Activated B cell treated with CpG ODN at 0.5 μM for 24 hours (primary cell): ENCODE measurements at regions of chr6 and their contacts with region 1.

Region 1: DNA sequence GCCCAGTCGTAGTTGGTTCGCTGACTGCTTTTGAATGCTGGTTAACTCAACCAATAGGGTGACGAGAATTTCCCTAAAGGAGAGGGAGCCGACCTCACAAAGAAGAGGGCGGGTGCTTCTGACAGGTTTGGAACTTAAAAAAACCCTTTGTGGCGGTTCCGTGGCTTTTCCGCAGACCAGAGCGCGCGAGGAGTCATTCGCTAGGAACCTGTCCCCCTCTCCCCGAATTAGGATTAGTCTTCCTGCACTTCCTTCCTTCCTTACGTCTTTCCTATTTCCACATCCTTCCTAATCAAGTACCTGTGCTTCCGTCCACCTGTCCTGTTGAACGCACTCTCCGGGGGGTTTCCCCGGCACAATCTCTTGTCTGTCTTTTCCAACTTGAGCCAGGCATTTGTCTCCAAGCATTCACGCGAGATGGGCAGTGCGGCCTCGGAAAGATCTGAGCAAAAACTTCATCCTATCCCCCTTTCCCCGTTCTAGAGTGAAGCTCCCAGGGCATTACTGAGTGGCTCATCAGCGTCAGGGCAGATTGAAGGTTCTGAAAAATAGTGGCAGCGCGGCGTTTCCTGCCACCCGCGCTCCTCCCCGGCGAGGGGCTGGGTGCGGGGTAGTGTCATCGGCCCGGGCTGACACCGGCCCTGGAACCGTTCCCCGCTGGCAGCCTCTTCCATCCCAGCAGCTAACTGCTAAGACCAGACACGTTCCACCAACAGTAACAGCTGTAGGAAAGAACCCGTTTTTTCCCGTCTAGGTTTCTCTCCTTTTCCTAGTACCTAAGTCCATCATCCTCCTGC is 1.5 kb upstream of the STXBP5 start:
- DNase-seq: peak; percentile 56
- ATAC-seq: peak; percentile 83
- H3K4me3 Mint-ChIP-seq: peak overlapping the region; percentile 93
- H3K27ac Mint-ChIP-seq: peak overlapping the region; percentile 96
- H3K4me1 Mint-ChIP-seq: peaks cover 28% of the 10 kb centered on the region
- H3K27me3 Mint-ChIP-seq: no peaks in the 10 kb centered on the region
- CTCF ChIP-seq: no peak

Region 2: DNA sequence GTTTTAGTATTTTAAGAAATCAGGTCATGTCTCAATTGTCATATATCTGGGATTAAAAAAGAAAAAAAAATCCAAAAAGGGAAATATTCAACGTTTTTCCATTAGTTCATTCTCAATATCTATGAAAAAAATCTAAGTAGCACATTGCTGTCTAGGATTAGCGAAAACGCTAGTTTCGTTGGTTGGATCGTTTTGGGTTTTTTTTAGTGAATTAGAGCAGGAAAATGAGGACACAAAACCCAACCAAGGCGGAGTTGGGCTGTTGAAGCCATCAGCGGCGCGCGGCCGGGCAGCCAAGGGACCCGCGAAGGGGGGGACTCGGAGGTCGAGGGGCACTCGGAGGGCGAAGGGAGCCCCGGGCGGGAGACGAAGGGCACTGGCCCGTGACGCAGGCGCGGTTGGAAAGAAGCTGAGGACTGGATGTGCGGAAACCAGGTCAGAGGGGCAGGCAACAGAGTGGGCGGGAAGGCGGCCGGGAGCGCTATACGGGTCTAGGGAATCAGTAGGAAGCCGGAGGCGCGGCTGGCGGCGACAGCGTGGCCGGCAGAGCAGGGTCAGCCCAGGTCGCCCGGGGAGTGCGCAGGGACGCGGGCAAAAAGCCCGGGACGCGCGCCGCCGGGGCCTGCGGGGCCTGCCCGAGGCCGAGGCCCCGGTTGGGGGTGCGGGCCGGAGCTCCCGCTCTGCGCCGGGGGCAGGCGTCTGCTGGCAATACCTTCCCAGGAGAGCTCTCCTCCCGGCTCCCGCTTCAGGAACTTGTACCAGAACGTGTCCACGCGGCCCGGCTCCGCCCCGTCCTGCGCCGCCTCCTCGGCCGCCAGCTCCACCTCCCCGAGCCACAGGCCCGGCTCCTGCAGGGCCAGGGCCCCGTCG is 1468.0 kb before region 1 on chr6:
- CTCF ChIA-PET with region 1: no interaction called
- POLR2A ChIA-PET with region 1: no interaction called
- intact Hi-C with region 1: loop called (anchors 2 kb)
- DNase-seq: peak; percentile 77
- ATAC-seq: peak; percentile 72
- H3K4me3 Mint-ChIP-seq: peak overlapping the region; percentile 94
- H3K27ac Mint-ChIP-seq: peak overlapping the region; percentile 94
- H3K4me1 Mint-ChIP-seq: peaks cover 34% of the 10 kb centered on the region
- H3K27me3 Mint-ChIP-seq: no peaks in the 10 kb centered on the region
- CTCF ChIP-seq: no peak

Region 3: DNA sequence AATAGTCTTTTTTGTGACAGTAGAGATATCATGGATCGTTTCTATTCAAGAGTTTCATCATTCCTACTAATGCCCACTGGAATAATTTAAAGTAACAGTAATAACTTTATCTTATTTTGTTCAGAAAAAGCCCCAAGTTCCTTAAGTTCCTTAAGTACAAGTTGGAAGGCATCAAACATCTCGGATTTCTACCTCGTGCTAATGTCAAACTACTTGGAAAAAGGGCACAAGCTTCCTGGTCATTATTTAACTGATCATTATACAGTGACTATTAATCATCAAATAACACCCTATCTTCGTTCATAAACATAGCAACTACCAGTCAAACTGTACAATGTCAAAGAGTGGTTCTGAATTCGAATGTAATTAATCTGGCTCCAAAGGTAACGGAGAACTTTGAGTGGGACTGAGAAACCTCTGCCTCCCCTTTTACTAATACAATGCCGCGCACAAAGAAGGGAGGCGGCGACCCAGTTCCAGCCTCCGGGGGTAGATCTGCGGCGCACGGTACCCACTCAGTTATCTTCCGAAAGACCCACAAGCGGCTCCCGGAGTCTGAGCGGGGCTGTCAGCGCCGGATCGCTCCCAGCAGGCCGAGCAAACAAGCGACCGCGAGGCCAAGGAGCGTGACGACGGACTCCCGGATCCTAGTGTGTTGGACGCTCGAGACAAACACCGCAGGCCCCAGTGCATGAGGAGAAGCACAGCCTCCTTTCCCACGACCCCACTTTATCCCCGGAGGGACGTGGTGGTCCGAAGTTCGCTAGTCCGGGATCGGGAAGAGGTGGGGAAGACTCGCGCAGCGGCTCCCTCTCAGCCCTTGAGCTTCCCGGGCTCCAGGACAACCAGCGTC is 1239.3 kb before region 1 on chr6:
- CTCF ChIA-PET with region 1: no interaction called
- POLR2A ChIA-PET with region 1: interaction called, 3 read pairs
- intact Hi-C with region 1: loop called (anchors 1 kb)
- DNase-seq: peak; percentile 44
- ATAC-seq: peak; percentile 4
- H3K4me3 Mint-ChIP-seq: peak overlapping the region; percentile 99
- H3K27ac Mint-ChIP-seq: peak overlapping the region; percentile 96
- H3K4me1 Mint-ChIP-seq: peaks cover 45% of the 10 kb centered on the region
- H3K27me3 Mint-ChIP-seq: no peaks in the 10 kb centered on the region
- CTCF ChIP-seq: no peak

Region 4: GRCh38 chr6:146876271-146877151 is 326.2 kb before region 1 on chr6:
- CTCF ChIA-PET with region 1: no interaction called
- POLR2A ChIA-PET with region 1: no interaction called
- intact Hi-C with region 1: loop called (anchors 5 kb)
- DNase-seq: no peak
- ATAC-seq: peak; percentile 52
- H3K4me3 Mint-ChIP-seq: no peak overlapping the region
- H3K27ac Mint-ChIP-seq: no peak overlapping the region
- H3K4me1 Mint-ChIP-seq: peaks cover 15% of the 10 kb centered on the region
- H3K27me3 Mint-ChIP-seq: no peaks in the 10 kb centered on the region
- CTCF ChIP-seq: no peak

Region 5: GRCh38 chr6:147322299-147323162 is 119.8 kb after region 1 on chr6:
- CTCF ChIA-PET with region 1: no interaction called
- POLR2A ChIA-PET with region 1: interaction called, 9 read pairs
- intact Hi-C with region 1: loop called (anchors 1 kb)
- DNase-seq: no peak
- ATAC-seq: peak; percentile 93
- H3K4me3 Mint-ChIP-seq: peak overlapping the region; percentile 79
- H3K27ac Mint-ChIP-seq: peak overlapping the region; percentile 93
- H3K4me1 Mint-ChIP-seq: peaks cover 27% of the 10 kb centered on the region
- H3K27me3 Mint-ChIP-seq: no peaks in the 10 kb centered on the region
- CTCF ChIP-seq: no peak

Region 6: DNA sequence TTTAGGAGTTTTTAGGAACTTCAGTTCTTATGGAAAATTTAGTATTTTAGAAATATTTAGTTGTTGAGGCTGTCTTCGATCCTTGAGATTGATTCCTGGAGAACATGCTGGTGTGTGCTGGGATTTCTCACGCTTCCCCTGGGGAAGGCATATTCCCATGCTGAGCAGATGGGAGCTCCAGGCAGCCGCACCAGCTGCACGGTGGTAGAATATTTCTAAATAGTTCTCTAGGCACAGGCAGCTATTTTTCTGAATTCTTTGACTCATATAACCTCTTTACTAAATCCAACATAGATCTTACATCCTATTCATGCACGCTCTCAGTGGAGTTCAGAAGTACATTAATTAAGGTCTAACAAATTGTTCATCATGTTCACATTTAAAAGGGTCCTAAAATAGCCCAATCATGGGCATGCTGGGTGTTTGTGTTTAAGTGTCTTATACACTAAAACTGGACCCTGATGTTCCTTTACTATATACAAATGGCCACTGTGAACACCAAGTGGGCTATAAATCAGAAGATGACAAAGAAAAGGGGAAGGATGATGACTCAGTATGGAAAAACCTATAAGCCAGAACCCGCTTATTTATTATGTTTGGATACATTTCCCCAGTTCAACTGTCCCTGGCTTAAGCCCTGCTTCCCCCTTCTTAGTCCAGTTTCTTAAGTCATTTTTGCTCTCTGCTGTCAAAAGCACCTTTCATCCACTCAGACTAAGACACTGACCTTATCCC is 1682.6 kb after region 1 on chr6:
- CTCF ChIA-PET with region 1: no interaction called
- POLR2A ChIA-PET with region 1: no interaction called
- intact Hi-C with region 1: loop called (anchors 5 kb)
- DNase-seq: no peak
- ATAC-seq: no peak
- H3K4me3 Mint-ChIP-seq: no peak overlapping the region
- H3K27ac Mint-ChIP-seq: no peak overlapping the region
- H3K4me1 Mint-ChIP-seq: peaks cover 22% of the 10 kb centered on the region
- H3K27me3 Mint-ChIP-seq: no peaks in the 10 kb centered on the region
- CTCF ChIP-seq: no peak